CD4-positive, alpha-beta memory T cell (primary cell): ENCODE measurements at regions of chr6 and their contacts with region 1.

Region 1: GRCh38 chr6:130282234-130282995 is 59.7 kb upstream of the SAMD3 start:
- DNase-seq: peak in 4 of 5 donors; percentile 38 to 49 (median 47)
- H3K4me3 ChIP-seq: no peak overlapping the region
- H3K4me3 Mint-ChIP-seq: no peak overlapping the region
- H3K27ac ChIP-seq: no peak overlapping the region
- H3K27ac Mint-ChIP-seq: peak overlapping the region in 4 of 7 donors; percentile 5 to 84 (median 25)
- H3K4me1 ChIP-seq: no peaks in the 10 kb centered on the region
- H3K4me1 Mint-ChIP-seq: peaks cover 6 to 17% (median 10%) of the 10 kb centered on the region in 4 donors
- H3K27me3 ChIP-seq: no peaks in the 10 kb centered on the region
- H3K27me3 Mint-ChIP-seq: no peaks in the 10 kb centered on the region

Region 2: DNA sequence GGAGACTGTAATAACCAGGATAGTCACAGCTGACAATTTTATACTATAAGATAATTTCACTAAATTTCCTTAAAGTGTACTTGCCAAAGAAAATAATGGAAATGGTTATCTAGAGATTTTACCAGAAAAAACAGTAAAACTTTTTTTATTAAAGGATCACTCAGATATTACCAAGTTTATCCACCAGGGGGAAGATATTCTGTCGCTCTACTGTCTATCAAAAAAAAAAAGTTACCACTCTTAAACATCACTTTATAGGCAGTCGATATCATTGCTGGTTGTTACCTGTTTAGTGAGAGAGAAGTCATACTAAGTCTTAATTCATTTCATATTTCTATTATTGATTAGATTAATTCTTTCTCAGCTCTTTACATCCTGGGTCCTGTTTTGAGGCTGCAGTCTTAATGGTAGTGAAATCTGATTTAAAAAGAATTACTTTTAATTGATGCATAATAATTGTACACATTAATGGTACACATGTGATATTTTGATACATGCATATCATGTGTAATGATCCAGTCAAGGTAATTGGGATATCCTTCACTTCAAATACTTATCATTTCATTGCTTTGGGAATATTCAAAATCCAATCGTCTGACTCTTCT is 245.1 kb before region 1 on chr6:
- CTCF ChIA-PET with region 1: interaction called, 18 read pairs
- POLR2A ChIA-PET with region 1: no interaction called
- intact Hi-C with region 1: loop called (anchors 1 kb)
- DNase-seq: peak in 4 of 5 donors; percentile 21 to 38 (median 27)
- H3K4me3 ChIP-seq: no peak overlapping the region
- H3K4me3 Mint-ChIP-seq: no peak overlapping the region
- H3K27ac ChIP-seq: no peak overlapping the region
- H3K27ac Mint-ChIP-seq: no peak overlapping the region
- H3K4me1 ChIP-seq: peaks cover 54% of the 10 kb centered on the region
- H3K4me1 Mint-ChIP-seq: peaks cover 40 to 67% (median 58%) of the 10 kb centered on the region in 4 donors
- H3K27me3 ChIP-seq: no peaks in the 10 kb centered on the region
- H3K27me3 Mint-ChIP-seq: no peaks in the 10 kb centered on the region

Region 3: DNA sequence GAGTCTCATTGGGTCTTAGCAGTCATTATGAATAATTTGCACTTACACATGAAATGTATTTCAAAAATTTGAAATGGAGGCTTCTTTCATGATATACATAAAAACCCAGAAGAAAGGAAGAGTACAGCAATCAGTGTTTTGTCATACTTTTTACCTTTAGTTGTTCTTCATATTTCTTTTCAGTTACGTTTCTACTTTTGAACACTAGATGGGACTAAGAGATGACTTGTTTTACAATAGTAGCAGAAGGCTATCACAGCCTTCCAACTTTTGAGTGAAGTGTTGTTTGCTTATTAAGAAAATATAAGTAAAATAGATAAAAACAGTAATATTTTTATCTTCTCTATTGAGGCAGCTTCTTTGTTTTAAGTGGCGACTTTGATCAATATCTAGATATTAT is 205.9 kb before region 1 on chr6:
- CTCF ChIA-PET with region 1: interaction called, 30 read pairs
- POLR2A ChIA-PET with region 1: no interaction called
- intact Hi-C with region 1: loop called (anchors 1 kb)
- DNase-seq: peak in 2 of 5 donors; percentile 10 to 16
- H3K4me3 ChIP-seq: no peak overlapping the region
- H3K4me3 Mint-ChIP-seq: no peak overlapping the region
- H3K27ac ChIP-seq: no peak overlapping the region
- H3K27ac Mint-ChIP-seq: peak overlapping the region in 1 of 7 donors; percentile 46
- H3K4me1 ChIP-seq: no peaks in the 10 kb centered on the region
- H3K4me1 Mint-ChIP-seq: peaks cover 11 to 22% (median 14%) of the 10 kb centered on the region in 4 donors
- H3K27me3 ChIP-seq: no peaks in the 10 kb centered on the region
- H3K27me3 Mint-ChIP-seq: no peaks in the 10 kb centered on the region

Region 4: DNA sequence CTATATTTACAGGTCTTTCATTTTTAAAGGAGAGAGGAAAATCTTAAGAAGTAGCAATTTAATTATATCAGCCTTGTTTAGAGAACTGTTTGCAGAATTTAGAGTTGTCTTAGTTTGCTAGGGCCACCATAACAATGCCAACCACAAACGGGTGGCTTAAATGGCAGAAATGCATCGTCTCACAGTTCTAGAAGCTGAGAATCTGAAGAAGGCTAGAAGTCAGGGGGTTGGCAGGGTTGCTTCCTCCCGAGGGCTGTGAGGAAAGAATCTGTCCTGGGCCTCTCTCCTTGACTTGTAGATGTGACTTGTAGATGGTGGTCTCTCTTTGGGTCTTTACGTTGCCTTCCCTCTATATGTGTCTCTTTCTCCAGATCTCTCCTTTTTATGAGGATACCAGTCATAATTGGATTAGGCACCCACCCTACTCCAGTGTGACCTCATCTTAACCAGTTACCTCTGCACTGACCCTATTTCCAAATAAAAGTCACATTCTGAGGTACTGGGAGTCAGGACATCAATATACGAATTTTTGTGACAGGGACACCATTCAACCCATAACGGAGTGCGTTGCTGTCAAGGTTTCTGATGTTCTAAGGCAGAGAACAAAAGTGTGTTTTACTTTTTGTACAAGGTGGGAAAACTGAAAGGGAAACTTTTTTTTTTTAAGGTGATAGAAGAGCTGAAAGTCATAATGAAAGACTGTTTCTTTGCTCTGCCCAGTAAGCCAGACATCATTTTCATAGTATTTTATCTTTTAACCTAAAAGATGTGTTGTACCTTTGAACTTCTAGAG is 144.1 kb before region 1 on chr6:
- CTCF ChIA-PET with region 1: interaction called, 33 read pairs
- POLR2A ChIA-PET with region 1: interaction called, 3 read pairs
- intact Hi-C with region 1: loop called (anchors 1 kb)
- DNase-seq: no peak
- H3K4me3 ChIP-seq: no peak overlapping the region
- H3K4me3 Mint-ChIP-seq: peak overlapping the region; percentile 74 to 91 (median 82)
- H3K27ac ChIP-seq: peak overlapping the region; percentile 1
- H3K27ac Mint-ChIP-seq: peak overlapping the region; percentile 80 to 93 (median 91)
- H3K4me1 ChIP-seq: peaks cover 68% of the 10 kb centered on the region
- H3K4me1 Mint-ChIP-seq: peaks cover 59 to 82% (median 69%) of the 10 kb centered on the region in 4 donors
- H3K27me3 ChIP-seq: no peaks in the 10 kb centered on the region
- H3K27me3 Mint-ChIP-seq: no peaks in the 10 kb centered on the region

Region 5: GRCh38 chr6:130215526-130215925 is 66.9 kb before region 1 on chr6:
- CTCF ChIA-PET with region 1: interaction called, 10 read pairs
- POLR2A ChIA-PET with region 1: no interaction called
- intact Hi-C with region 1: no loop called
- DNase-seq: peak; percentile 71 to 82 (median 78)
- H3K4me3 ChIP-seq: peak overlapping the region; percentile 7 to 39
- H3K4me3 Mint-ChIP-seq: peak overlapping the region; percentile 79 to 95 (median 86)
- H3K27ac ChIP-seq: peak overlapping the region; percentile 23
- H3K27ac Mint-ChIP-seq: peak overlapping the region; percentile 25 to 89 (median 69)
- H3K4me1 ChIP-seq: peaks cover 77% of the 10 kb centered on the region
- H3K4me1 Mint-ChIP-seq: peaks cover 38 to 78% (median 61%) of the 10 kb centered on the region in 4 donors
- H3K27me3 ChIP-seq: no peaks in the 10 kb centered on the region
- H3K27me3 Mint-ChIP-seq: no peaks in the 10 kb centered on the region

Region 6: GRCh38 chr6:130269969-130270635 is 12.3 kb before region 1 on chr6:
- CTCF ChIA-PET with region 1: interaction called, 11 read pairs
- POLR2A ChIA-PET with region 1: no interaction called
- intact Hi-C with region 1: no loop called
- DNase-seq: no peak
- H3K4me3 ChIP-seq: no peak overlapping the region
- H3K4me3 Mint-ChIP-seq: no peak overlapping the region
- H3K27ac ChIP-seq: no peak overlapping the region
- H3K27ac Mint-ChIP-seq: no peak overlapping the region
- H3K4me1 ChIP-seq: no peaks in the 10 kb centered on the region
- H3K4me1 Mint-ChIP-seq: peaks cover 0 to 5% (median under 1%) of the 10 kb centered on the region in 4 donors
- H3K27me3 ChIP-seq: no peaks in the 10 kb centered on the region
- H3K27me3 Mint-ChIP-seq: no peaks in the 10 kb centered on the region

Region 7: DNA sequence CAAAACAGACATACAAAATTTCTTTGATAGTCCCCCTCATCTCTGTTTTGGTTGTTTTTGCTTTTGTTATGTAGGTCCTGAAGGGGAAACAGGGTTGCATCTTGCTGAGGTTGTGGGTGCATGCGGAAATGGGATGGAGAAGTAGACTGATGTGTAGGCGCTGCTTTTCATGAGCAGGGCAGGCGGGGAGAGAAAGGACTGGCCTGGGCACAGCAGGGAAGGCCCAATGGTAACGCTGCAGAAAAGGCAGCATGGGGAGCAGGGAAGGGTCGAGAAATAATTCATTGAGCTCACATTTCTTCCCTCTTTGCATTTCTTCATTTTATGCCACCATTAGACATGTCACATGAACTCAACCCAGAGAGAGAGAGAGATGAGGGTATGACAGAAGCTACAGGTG is 1743.1 kb after region 1 on chr6:
- CTCF ChIA-PET with region 1: no interaction called
- POLR2A ChIA-PET with region 1: no interaction called
- intact Hi-C with region 1: no loop called
- DNase-seq: no peak
- H3K4me3 ChIP-seq: no peak overlapping the region
- H3K4me3 Mint-ChIP-seq: peak overlapping the region in 1 of 8 donors; percentile 4
- H3K27ac ChIP-seq: no peak overlapping the region
- H3K27ac Mint-ChIP-seq: no peak overlapping the region
- H3K4me1 ChIP-seq: no peaks in the 10 kb centered on the region
- H3K4me1 Mint-ChIP-seq: no peaks in the 10 kb centered on the region
- H3K27me3 ChIP-seq: no peaks in the 10 kb centered on the region
- H3K27me3 Mint-ChIP-seq: peaks cover 0 to 3% of the 10 kb centered on the region in 2 donors